ENCODE measurements at regions of chr15 and their contacts with region 1.

Region 1: DNA sequence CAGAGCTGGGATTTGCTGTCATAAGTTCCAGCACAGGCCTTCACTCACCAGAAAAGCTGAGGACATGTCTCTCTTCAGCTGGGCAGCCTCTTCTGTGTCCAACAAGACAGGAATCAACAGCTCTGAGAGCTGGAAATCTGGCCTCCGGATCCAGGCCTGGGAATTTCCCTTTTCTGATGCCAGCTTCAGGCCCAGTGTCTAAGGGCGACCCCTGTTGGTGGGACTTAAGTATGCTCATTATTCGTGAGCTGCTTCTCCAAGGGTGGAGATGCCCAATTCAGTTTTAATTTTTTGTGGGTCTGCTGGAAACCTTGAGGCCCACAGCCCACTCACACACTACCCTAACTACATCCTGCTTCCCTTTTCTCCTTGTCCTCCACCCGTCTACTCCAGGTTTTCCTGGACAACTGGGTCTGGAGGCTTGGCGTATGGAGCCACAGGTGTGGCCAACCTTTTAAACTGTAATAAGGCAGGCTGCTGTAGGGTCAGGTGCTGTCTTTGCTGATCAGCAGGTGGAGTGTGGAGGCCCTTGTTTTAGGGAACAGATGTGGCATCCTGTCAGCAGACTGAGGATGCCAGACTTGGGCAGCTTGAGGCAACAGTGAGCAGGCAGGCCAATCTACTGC is 2.6 kb upstream of the CEMIP start:
- DNase-seq: peak; percentile 79
- CTCF ChIP-seq: peak; percentile 84

Region 2: DNA sequence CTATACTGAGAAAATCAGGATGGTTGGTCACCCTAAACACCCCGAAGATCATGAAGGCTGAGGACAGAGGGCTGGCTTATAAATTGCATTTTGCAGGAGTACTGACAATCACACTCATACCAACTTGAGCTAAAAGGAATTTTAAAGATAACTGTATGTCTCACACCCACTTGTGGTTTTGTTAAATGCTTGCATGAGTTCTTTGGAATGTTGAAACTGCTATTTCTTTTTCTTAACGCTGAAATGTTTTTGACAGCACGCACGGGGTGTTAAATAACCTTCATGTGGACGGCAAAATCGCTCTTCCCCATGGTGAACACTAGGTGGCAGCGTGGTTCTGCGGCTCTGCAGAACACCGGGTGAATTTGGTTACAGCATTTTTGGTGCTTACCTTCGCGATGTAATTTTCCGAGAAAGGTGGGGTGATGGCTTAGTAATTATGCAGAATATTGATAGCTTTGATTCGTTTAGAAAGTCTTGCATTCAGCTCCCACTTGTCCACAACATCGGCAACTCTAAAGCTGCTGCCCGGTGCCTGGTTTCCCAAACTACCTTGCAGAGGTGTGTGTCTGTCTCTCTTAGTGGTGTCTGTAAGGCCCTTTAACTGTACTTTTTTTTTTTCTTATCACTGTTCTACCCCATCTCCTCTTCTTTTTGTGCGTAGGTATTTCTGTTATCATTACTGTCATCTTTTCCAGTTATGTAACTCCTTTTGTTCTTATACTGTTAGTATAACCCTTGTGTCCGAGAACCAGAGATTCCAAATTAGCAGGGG is 320.7 kb before region 1 on chr15:
- in situ Hi-C with region 1: loop called (anchors 10 kb)
- DNase-seq: peak; percentile 75
- CTCF ChIP-seq: peak; percentile 95

Region 3: GRCh38 chr15:80934761-80935221 is 158.3 kb after region 1 on chr15:
- in situ Hi-C with region 1: no loop called
- DNase-seq: no peak
- CTCF ChIP-seq: no peak

Region 4: GRCh38 chr15:80970018-80970658 is 193.6 kb after region 1 on chr15:
- in situ Hi-C with region 1: loop called (anchors 25 kb)
- DNase-seq: peak; percentile 63
- CTCF ChIP-seq: peak; percentile 75